Breast epithelium (tissue), 4 donors: ENCODE measurements at regions of chr1 and their contacts with region 1.

Region 1: GRCh38 chr1:5793516-5793915 is 198.7 kb downstream of the NPHP4 start:
- DNase-seq: no peak
- H3K4me3 ChIP-seq: no peak overlapping the region
- H3K27ac ChIP-seq: no peak overlapping the region
- H3K4me1 ChIP-seq: no peaks in the 10 kb centered on the region
- H3K27me3 ChIP-seq: peaks cover 0 to 15% of the 10 kb centered on the region in 2 donors
- CTCF ChIP-seq: no peak
- POLR2A ChIP-seq: no peak

Region 2: GRCh38 chr1:5667513-5668325 is 125.8 kb before region 1 on chr1:
- intact Hi-C with region 1: no loop called
- DNase-seq: peak; percentile 41 to 72
- H3K4me3 ChIP-seq: no peak overlapping the region
- H3K27ac ChIP-seq: no peak overlapping the region
- H3K4me1 ChIP-seq: no peaks in the 10 kb centered on the region
- H3K27me3 ChIP-seq: peaks cover 0 to 18% of the 10 kb centered on the region in 2 donors
- CTCF ChIP-seq: no peak
- POLR2A ChIP-seq: no peak

Region 3: DNA sequence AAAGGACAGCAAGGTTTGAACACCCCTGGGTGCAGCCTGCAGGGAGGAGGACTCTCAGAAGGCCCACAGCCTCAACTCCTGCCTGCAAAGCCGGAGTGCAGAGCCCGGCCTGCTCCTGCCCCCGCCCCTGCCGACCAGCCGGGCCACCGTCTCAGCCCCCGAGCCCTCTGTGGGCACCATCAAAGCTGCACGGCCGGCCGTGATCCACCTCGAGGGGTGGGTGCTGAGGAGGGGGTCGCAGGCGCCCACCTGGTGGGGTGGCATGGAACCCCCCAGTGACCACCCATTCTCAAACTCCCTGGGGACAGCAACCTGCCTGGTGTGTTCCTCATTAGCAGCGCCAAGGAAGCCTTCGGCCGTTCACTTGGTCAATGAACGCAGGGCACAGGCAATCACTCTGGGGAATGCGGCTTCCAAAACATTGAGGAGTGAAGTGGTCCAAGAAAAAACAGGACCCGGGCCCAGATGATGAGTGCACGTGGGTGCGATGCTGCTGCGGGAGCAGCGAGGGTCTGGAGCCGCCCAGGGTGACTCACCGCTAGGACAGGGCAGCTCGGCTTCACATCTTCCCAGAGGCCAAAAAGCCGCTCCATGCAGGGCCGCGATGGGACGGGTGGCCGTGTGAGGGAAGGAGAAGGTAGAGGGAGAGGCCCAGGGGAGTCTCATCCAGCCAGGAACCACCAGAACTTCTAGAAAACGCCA is 41.1 kb after region 1 on chr1:
- intact Hi-C with region 1: loop called (anchors 1 kb)
- DNase-seq: no peak
- H3K4me3 ChIP-seq: no peak overlapping the region
- H3K27ac ChIP-seq: no peak overlapping the region
- H3K4me1 ChIP-seq: peaks cover 0 to 8% of the 10 kb centered on the region in 2 donors
- H3K27me3 ChIP-seq: peaks cover 0 to 39% of the 10 kb centered on the region in 2 donors
- CTCF ChIP-seq: no peak
- POLR2A ChIP-seq: no peak

Region 4: GRCh38 chr1:5856246-5856815 is 62.8 kb after region 1 on chr1:
- intact Hi-C with region 1: no loop called
- DNase-seq: no peak
- H3K4me3 ChIP-seq: no peak overlapping the region
- H3K27ac ChIP-seq: no peak overlapping the region
- H3K4me1 ChIP-seq: no peaks in the 10 kb centered on the region
- H3K27me3 ChIP-seq: peaks cover 0 to 6% of the 10 kb centered on the region in 2 donors
- CTCF ChIP-seq: no peak
- POLR2A ChIP-seq: no peak